ENCODE measurements at regions of chr10 and their contacts with region 1.

Region 1: DNA sequence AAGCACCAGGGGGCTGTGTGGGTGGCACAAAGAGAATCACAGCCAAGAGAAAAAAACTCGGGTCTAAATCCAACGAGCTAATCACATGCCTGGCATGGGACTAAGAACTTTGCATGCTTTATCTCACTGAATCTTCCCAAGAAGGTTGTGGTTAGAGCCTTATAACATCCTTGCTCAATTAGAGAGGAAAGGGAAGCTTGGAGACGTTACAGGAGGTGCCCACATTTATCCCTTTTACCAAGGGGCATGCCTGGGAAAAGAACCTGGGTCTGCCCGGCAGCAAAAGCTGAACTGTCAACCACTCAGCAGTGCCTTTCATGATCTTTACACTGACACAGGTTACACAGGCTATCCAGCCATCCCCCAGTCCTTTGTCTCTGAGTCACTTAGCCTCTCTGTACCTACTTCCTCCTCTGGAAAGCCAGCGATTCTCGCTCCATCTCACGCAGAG is 190.1 kb downstream of the PRPF18 start:
- DNase-seq: no peak
- ATAC-seq: no peak

Region 2: GRCh38 chr10:13659897-13660550 is 116.9 kb before region 1 on chr10:
- intact Hi-C with region 1: loop called (anchors 2 kb)
- DNase-seq: peak; percentile 84
- ATAC-seq: peak; percentile 82